ENCODE measurements at regions of chr4 and their contacts with region 1.

Region 1: GRCh38 chr4:154506253-154506652 is 14.7 kb upstream of the DCHS2 start:
- DNase-seq: no peak
- H3K4me3 ChIP-seq: no peak overlapping the region
- H3K27ac ChIP-seq: no peak overlapping the region
- H3K4me1 ChIP-seq: no peaks in the 10 kb centered on the region; a peak in 1 of 7 replicates
- H3K27me3 ChIP-seq: no peaks in the 10 kb centered on the region
- CTCF ChIP-seq: peak in 2 of 3 experiments; percentile 60 to 61; a peak in 3 of 4 replicates
- EP300 ChIP-seq: no peak
- POLR2A ChIP-seq: no peak
- RAD21 ChIP-seq: peak; percentile 68 to 70

Region 2: GRCh38 chr4:154332681-154333421 is 173.4 kb before region 1 on chr4:
- CTCF ChIA-PET with region 1: interaction called, 29 read pairs
- POLR2A ChIA-PET with region 1: no interaction called
- DNase-seq: peak; percentile 53 to 57
- H3K4me3 ChIP-seq: peak overlapping the region; percentile 17 to 51 (median 42); a peak in 7 of 8 replicates
- H3K27ac ChIP-seq: no peak overlapping the region
- H3K4me1 ChIP-seq: no peaks in the 10 kb centered on the region; a peak in 2 of 7 replicates
- H3K27me3 ChIP-seq: peaks cover 0 to 4% (median 3%) of the 10 kb centered on the region in 4 experiments; a peak in 2 of 7 replicates
- CTCF ChIP-seq: peak; percentile 16 to 34 (median 23); a peak in 2 of 4 replicates
- EP300 ChIP-seq: no peak
- POLR2A ChIP-seq: no peak
- RAD21 ChIP-seq: peak; percentile 29 to 30; a peak in 2 of 4 replicates

Region 3: GRCh38 chr4:154344686-154345085 is 161.6 kb before region 1 on chr4:
- CTCF ChIA-PET with region 1: interaction called, 11 read pairs
- POLR2A ChIA-PET with region 1: no interaction called
- DNase-seq: no peak
- H3K4me3 ChIP-seq: no peak overlapping the region
- H3K27ac ChIP-seq: no peak overlapping the region
- H3K4me1 ChIP-seq: no peaks in the 10 kb centered on the region
- H3K27me3 ChIP-seq: no peaks in the 10 kb centered on the region
- CTCF ChIP-seq: peak; percentile 48 to 59 (median 50)
- EP300 ChIP-seq: no peak
- POLR2A ChIP-seq: no peak
- RAD21 ChIP-seq: peak; percentile 66 to 74

Region 4: GRCh38 chr4:154416190-154416547 is 90.1 kb before region 1 on chr4:
- CTCF ChIA-PET with region 1: interaction called, 32 read pairs
- POLR2A ChIA-PET with region 1: no interaction called
- DNase-seq: peak in 1 of 2 experiments; percentile 69
- H3K4me3 ChIP-seq: peak overlapping the region; percentile 69 to 90 (median 74); a peak in 7 of 8 replicates
- H3K27ac ChIP-seq: no peak overlapping the region
- H3K4me1 ChIP-seq: peaks cover 0 to 5% (median 0%) of the 10 kb centered on the region in 4 experiments; a peak in 1 of 7 replicates
- H3K27me3 ChIP-seq: peaks cover 0 to 14% (median 9%) of the 10 kb centered on the region in 4 experiments; a peak in 4 of 7 replicates
- CTCF ChIP-seq: peak in 2 of 3 experiments; percentile 35 to 47; a peak in 3 of 4 replicates
- EP300 ChIP-seq: no peak
- POLR2A ChIP-seq: no peak
- RAD21 ChIP-seq: peak in 1 of 2 experiments; percentile 15; a peak in 1 of 4 replicates

Region 5: DNA sequence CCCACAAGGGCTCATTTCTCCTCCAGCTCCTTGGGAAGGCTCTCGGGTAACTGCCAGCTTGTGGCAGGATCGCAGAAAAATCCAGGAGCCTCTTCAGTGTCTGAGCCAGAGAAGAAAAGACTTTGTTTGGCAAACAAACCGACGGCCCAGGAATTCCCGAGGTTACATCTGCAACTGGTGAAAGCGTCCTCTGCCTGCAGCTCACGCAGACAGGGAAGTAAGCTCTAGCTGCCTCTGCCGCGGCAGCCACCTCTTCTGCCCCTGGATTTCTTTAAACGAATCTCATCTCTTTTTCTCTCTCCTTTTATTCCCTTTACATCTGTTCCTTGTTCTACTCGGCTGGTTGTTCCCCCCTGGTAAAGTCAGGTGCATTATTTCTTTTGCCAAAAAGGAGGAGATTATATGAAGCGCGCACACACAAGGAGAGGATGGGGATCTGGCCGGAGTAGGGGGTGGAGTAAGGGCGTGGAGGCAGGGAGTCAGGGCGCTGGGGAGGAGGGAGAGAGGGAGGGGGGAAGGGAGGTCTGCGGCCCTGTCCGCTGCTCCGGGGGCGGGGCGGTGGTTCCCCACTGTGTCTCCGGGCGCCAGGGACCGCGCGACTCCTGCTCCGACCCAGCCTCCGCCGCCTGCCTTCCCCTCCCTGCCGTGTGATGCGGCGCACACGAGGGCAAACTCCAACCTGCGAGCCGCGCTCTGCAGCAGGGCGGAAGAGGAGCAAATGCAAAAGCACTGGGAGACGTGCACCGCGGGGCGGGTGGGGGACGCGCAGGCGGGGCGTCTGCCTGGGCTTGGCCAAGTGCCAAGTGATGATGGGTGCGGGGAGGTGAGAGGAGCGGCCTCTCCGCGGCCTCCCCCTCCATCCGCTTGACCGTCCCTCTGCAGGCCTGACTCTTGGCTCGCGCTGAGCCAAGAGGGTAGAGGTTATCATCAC is 14.6 kb before region 1 on chr4 and contains the start of gene DCHS2:
- CTCF ChIA-PET with region 1: interaction called, 97 read pairs
- POLR2A ChIA-PET with region 1: interaction called, 5 read pairs
- DNase-seq: peak in 1 of 2 experiments; percentile 78
- H3K4me3 ChIP-seq: peak within 1 kb of the TSS; percentile 43 to 64 (median 48)
- H3K27ac ChIP-seq: no peak within 1 kb of the TSS
- H3K4me1 ChIP-seq: peaks cover 3 to 9% (median 5%) of the 10 kb centered on the region in 4 experiments; a peak in 6 of 7 replicates
- H3K27me3 ChIP-seq: peaks cover 24 to 46% (median 39%) of the 10 kb centered on the region in 4 experiments
- CTCF ChIP-seq: no peak
- EP300 ChIP-seq: no peak
- POLR2A ChIP-seq: no peak
- RAD21 ChIP-seq: no peak
- total RNA-seq, gene DCHS2: 1.8 and 2.6 TPM in 2 replicates

Region 6: GRCh38 chr4:154516318-154517029 is 10.2 kb after region 1 on chr4:
- CTCF ChIA-PET with region 1: interaction called, 30 read pairs
- POLR2A ChIA-PET with region 1: interaction called, 3 read pairs
- DNase-seq: no peak
- H3K4me3 ChIP-seq: no peak overlapping the region
- H3K27ac ChIP-seq: no peak overlapping the region
- H3K4me1 ChIP-seq: peaks cover 0 to 7% (median 2%) of the 10 kb centered on the region in 4 experiments; a peak in 2 of 7 replicates
- H3K27me3 ChIP-seq: no peaks in the 10 kb centered on the region
- CTCF ChIP-seq: no peak
- EP300 ChIP-seq: no peak
- POLR2A ChIP-seq: no peak
- RAD21 ChIP-seq: no peak

Region 7: GRCh38 chr4:154677923-154678322 is 171.7 kb after region 1 on chr4:
- CTCF ChIA-PET with region 1: no interaction called
- POLR2A ChIA-PET with region 1: no interaction called
- DNase-seq: no peak
- H3K4me3 ChIP-seq: no peak overlapping the region
- H3K27ac ChIP-seq: no peak overlapping the region
- H3K4me1 ChIP-seq: peaks cover 0 to 4% (median 0%) of the 10 kb centered on the region in 4 experiments; a peak in 1 of 7 replicates
- H3K27me3 ChIP-seq: no peaks in the 10 kb centered on the region
- CTCF ChIP-seq: no peak
- EP300 ChIP-seq: no peak
- POLR2A ChIP-seq: no peak
- RAD21 ChIP-seq: no peak